ENCODE measurements at regions of chr20 and their contacts with region 1.

Region 1: GRCh38 chr20:25195014-25195961 is at the start of gene ENTPD6:
- DNase-seq: peak; percentile 88 to 96 (median 93)
- ATAC-seq: peak; percentile 82
- H3K4me3 ChIP-seq: peak within 1 kb of the TSS; percentile 97
- H3K4me3 Mint-ChIP-seq: peak within 1 kb of the TSS; percentile 89
- H3K27ac ChIP-seq: peak within 1 kb of the TSS; percentile 75 to 83
- H3K27ac Mint-ChIP-seq: peak within 1 kb of the TSS; percentile 93
- H3K4me1 ChIP-seq: peaks cover 42% of the 10 kb centered on the region
- H3K4me1 Mint-ChIP-seq: peaks cover 49% of the 10 kb centered on the region
- H3K27me3 ChIP-seq: no peaks in the 10 kb centered on the region
- H3K27me3 Mint-ChIP-seq: no peaks in the 10 kb centered on the region
- CTCF ChIP-seq: no peak
- total RNA-seq, gene ENTPD6: 78.5 to 85.1 TPM

Region 2: GRCh38 chr20:24992487-24993205 is 202.6 kb before region 1 on chr20 and contains the start of gene APMAP:
- CTCF ChIA-PET with region 1: no interaction called
- POLR2A ChIA-PET with region 1: interaction called, 15 read pairs
- intact Hi-C with region 1: loop called (anchors 2 kb)
- DNase-seq: peak; percentile 89 to 99 (median 96)
- ATAC-seq: peak; percentile 91
- H3K4me3 ChIP-seq: peak within 1 kb of the TSS; percentile 87
- H3K4me3 Mint-ChIP-seq: peak within 1 kb of the TSS; percentile 96
- H3K27ac ChIP-seq: peak within 1 kb of the TSS; percentile 90 to 97
- H3K27ac Mint-ChIP-seq: peak within 1 kb of the TSS; percentile 99
- H3K4me1 ChIP-seq: peaks cover 42% of the 10 kb centered on the region
- H3K4me1 Mint-ChIP-seq: peaks cover 73% of the 10 kb centered on the region
- H3K27me3 ChIP-seq: no peaks in the 10 kb centered on the region
- H3K27me3 Mint-ChIP-seq: no peaks in the 10 kb centered on the region
- CTCF ChIP-seq: no peak
- total RNA-seq, gene APMAP: 9.5 to 11.3 TPM

Region 3: DNA sequence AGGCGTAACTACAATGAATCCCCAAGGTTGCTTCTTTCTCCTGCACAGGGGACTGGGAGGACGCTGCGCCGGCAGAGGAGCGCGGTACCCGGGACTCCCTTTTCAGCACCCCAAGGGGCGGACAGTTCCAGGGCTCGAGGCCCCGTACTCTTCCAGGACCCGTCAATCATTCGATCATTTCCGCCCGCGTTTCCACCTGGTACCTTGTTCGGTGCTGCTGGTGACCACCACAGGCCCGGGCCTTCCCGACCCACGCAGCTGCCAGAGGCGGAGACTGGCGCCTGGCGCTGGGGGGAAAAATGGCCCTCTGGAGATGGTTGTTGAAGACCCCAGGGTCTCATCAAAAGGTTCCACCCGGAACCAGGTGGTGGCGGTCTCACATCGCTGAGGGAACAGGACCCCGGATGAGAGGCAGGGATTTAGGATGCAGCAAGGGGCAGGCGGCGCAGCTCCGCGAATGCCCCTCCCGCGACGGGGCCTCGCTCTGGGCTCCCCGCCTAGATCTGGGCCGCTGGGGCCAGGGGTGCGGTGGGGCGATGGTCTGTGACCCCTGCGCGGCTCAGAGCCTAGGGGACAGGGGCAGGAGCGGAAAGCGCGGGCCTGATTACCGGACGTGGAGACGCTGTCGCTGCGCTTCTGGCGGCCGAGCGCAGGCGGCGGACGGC is 114.1 kb before region 1 on chr20:
- CTCF ChIA-PET with region 1: no interaction called
- POLR2A ChIA-PET with region 1: interaction called, 3 read pairs
- intact Hi-C with region 1: loop called in 1 of 2 experiments (anchors 5 kb)
- DNase-seq: peak in 10 of 14 experiments; percentile 15 to 68 (median 29)
- ATAC-seq: peak; percentile 57
- H3K4me3 ChIP-seq: no peak overlapping the region
- H3K4me3 Mint-ChIP-seq: no peak overlapping the region
- H3K27ac ChIP-seq: no peak overlapping the region
- H3K27ac Mint-ChIP-seq: no peak overlapping the region
- H3K4me1 ChIP-seq: peaks cover 40% of the 10 kb centered on the region
- H3K4me1 Mint-ChIP-seq: peaks cover 27% of the 10 kb centered on the region
- H3K27me3 ChIP-seq: peaks cover 88 to 93% of the 10 kb centered on the region in 2 experiments
- H3K27me3 Mint-ChIP-seq: peaks cover 81% of the 10 kb centered on the region
- CTCF ChIP-seq: no peak

Region 4: DNA sequence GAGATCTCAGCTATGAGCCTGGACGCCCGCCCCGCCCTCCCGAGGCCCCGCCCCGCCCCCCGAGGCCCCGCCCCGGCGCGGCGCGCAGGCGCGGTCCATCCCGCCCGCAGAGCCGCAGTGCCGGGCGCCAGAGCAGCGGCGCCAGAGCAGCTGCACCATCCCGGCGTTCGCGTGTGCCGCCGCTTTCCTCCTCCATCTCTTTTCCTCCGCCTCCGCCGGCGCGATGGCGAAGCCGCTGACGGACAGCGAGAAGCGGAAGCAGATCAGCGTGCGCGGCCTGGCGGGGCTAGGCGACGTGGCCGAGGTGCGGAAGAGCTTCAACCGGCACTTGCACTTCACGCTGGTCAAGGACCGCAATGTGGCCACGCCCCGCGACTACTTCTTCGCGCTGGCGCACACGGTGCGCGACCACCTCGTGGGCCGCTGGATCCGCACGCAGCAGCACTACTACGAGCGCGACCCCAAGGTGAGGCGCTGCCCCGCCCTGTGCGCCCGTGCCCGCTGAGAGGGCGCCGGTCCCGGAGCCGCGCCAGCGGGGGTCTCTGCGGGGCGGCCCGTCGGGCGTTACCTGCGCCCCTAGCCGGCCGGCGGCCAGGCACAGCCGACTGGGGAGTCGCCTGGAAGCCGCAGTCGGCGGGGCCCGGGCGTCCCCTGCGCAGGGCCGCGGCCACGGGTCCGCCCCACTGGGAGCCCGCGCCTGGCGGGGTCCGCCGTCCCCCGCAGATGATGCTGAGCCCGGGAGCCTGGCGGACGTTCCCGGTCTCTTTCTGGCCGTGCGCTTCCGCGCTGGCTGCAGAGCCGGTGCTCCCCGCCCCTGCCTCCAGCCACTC is 52.9 kb after region 1 on chr20 and contains the start of gene PYGB:
- CTCF ChIA-PET with region 1: interaction called, 8 read pairs
- POLR2A ChIA-PET with region 1: interaction called, 28 read pairs
- intact Hi-C with region 1: loop called (anchors 1 to 5 kb)
- DNase-seq: peak; percentile 59 to 90 (median 72)
- ATAC-seq: peak; percentile 86
- H3K4me3 ChIP-seq: peak within 1 kb of the TSS; percentile 94
- H3K4me3 Mint-ChIP-seq: peak within 1 kb of the TSS; percentile 95
- H3K27ac ChIP-seq: no peak within 1 kb of the TSS
- H3K27ac Mint-ChIP-seq: peak within 1 kb of the TSS; percentile 80
- H3K4me1 ChIP-seq: peaks cover 29% of the 10 kb centered on the region
- H3K4me1 Mint-ChIP-seq: peaks cover 56% of the 10 kb centered on the region
- H3K27me3 ChIP-seq: no peaks in the 10 kb centered on the region
- H3K27me3 Mint-ChIP-seq: peaks cover 6% of the 10 kb centered on the region
- CTCF ChIP-seq: no peak
- total RNA-seq, gene PYGB: 26.3 to 27.5 TPM

Region 5: GRCh38 chr20:25390538-25391528 is 195.5 kb after region 1 on chr20 and contains the start of gene ABHD12:
- CTCF ChIA-PET with region 1: no interaction called
- POLR2A ChIA-PET with region 1: interaction called, 5 read pairs
- intact Hi-C with region 1: loop called (anchors 5 kb)
- DNase-seq: peak; percentile 86 to 97 (median 92)
- ATAC-seq: peak; percentile 89
- H3K4me3 ChIP-seq: peak within 1 kb of the TSS; percentile 75
- H3K4me3 Mint-ChIP-seq: peak within 1 kb of the TSS; percentile 92
- H3K27ac ChIP-seq: peak within 1 kb of the TSS in 1 of 2 donors; percentile 42
- H3K27ac Mint-ChIP-seq: peak within 1 kb of the TSS; percentile 84
- H3K4me1 ChIP-seq: peaks cover 10% of the 10 kb centered on the region
- H3K4me1 Mint-ChIP-seq: peaks cover 23% of the 10 kb centered on the region
- H3K27me3 ChIP-seq: no peaks in the 10 kb centered on the region
- H3K27me3 Mint-ChIP-seq: no peaks in the 10 kb centered on the region
- CTCF ChIP-seq: no peak
- total RNA-seq, gene ABHD12: 13.4 to 17.0 TPM

Region 6: GRCh38 chr20:25623736-25624499 is 428.6 kb after region 1 on chr20 and contains the start of gene NANP:
- CTCF ChIA-PET with region 1: no interaction called
- POLR2A ChIA-PET with region 1: no interaction called
- intact Hi-C with region 1: loop called in 1 of 2 experiments (anchors 5 kb)
- DNase-seq: peak; percentile 56 to 95 (median 73)
- ATAC-seq: peak; percentile 76
- H3K4me3 ChIP-seq: peak within 1 kb of the TSS; percentile 69
- H3K4me3 Mint-ChIP-seq: peak within 1 kb of the TSS; percentile 96
- H3K27ac ChIP-seq: peak within 1 kb of the TSS in 1 of 2 donors; percentile 21
- H3K27ac Mint-ChIP-seq: peak within 1 kb of the TSS; percentile 88
- H3K4me1 ChIP-seq: peaks cover 19% of the 10 kb centered on the region
- H3K4me1 Mint-ChIP-seq: peaks cover 22% of the 10 kb centered on the region
- H3K27me3 ChIP-seq: no peaks in the 10 kb centered on the region
- H3K27me3 Mint-ChIP-seq: no peaks in the 10 kb centered on the region
- CTCF ChIP-seq: no peak
- total RNA-seq, gene NANP: 1.1 to 1.2 TPM